ENCODE measurements at regions of chrX and their contacts with region 1.

Region 1: DNA sequence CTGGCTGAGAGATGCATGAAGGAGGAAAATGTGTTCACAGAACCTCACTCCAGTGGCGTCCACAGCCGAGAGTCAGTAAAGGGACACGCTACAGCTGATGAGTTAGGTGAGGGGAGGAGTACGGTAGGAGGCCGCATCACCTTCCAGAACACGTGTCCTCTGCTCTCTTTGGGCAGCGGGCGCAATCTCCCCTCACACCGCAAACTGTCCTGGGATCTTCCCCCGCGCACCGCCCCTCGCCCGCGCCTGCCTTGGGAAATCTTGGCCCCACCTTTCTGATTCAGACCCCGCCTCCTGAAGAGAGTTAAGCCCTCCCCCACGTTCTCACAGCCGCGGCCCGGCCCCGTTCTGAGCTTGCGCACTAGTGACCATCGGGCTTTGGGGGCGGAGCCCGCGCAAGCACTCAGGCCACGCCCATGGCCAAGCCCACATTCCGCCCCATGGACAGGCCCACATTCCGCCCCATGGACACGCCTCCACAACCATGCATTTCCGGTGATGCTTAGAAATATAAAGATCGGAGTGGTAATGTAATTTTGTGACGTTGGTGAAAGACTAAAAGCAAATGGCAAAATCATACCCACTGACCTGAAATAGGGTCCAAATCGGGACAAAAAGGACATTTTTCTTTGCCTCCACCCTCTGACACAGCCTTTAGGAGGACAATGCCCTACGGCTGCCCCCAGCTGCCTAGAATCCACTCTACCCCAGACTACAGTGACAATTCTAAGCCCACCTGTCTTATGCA is 13.3 kb downstream of the SMIM10 start:
- DNase-seq: peak; percentile 82 to 92
- H3K4me3 ChIP-seq: peak overlapping the region; percentile 44 to 77 (median 54)
- H3K27ac ChIP-seq: peak overlapping the region; percentile 62; the same call in 1 of the 2 replicates
- H3K4me1 ChIP-seq: peaks cover 0 to 3% (median 1%) of the 10 kb centered on the region in 4 experiments; a peak in 2 of 7 replicates
- H3K27me3 ChIP-seq: no peaks in the 10 kb centered on the region
- CTCF ChIP-seq: no peak
- EP300 ChIP-seq: no peak
- POLR2A ChIP-seq: 0 out of 3 replicates have a peak, but pooled peaks of 1 of the 2 experiments have one; percentile 37
- RAD21 ChIP-seq: no peak

Region 2: GRCh38 chrX:134948333-134949241 is 55.5 kb before region 1 on chrX:
- CTCF ChIA-PET with region 1: no interaction called
- POLR2A ChIA-PET with region 1: no interaction called
- DNase-seq: no peak
- H3K4me3 ChIP-seq: no peak overlapping the region
- H3K27ac ChIP-seq: no peak overlapping the region
- H3K4me1 ChIP-seq: peaks cover 0 to 2% (median 0%) of the 10 kb centered on the region in 4 experiments; a peak in 3 of 7 replicates
- H3K27me3 ChIP-seq: no peaks in the 10 kb centered on the region
- CTCF ChIP-seq: no peak
- EP300 ChIP-seq: no peak
- POLR2A ChIP-seq: no peak
- RAD21 ChIP-seq: no peak

Region 3: GRCh38 chrX:134969726-134970125 is 34.3 kb before region 1 on chrX:
- CTCF ChIA-PET with region 1: interaction called, 17 read pairs
- POLR2A ChIA-PET with region 1: no interaction called
- DNase-seq: no peak
- H3K4me3 ChIP-seq: no peak overlapping the region
- H3K27ac ChIP-seq: no peak overlapping the region
- H3K4me1 ChIP-seq: no peaks in the 10 kb centered on the region
- H3K27me3 ChIP-seq: no peaks in the 10 kb centered on the region
- CTCF ChIP-seq: no peak
- EP300 ChIP-seq: no peak
- POLR2A ChIP-seq: no peak
- RAD21 ChIP-seq: no peak

Region 4: GRCh38 chrX:135024526-135024925 is 20.5 kb after region 1 on chrX:
- CTCF ChIA-PET with region 1: interaction called, 3 read pairs
- POLR2A ChIA-PET with region 1: interaction called, 10 read pairs
- DNase-seq: no peak
- H3K4me3 ChIP-seq: no peak overlapping the region
- H3K27ac ChIP-seq: no peak overlapping the region
- H3K4me1 ChIP-seq: peaks cover 0 to 3% (median 0%) of the 10 kb centered on the region in 4 experiments; a peak in 1 of 7 replicates
- H3K27me3 ChIP-seq: peaks cover 0 to 4% (median 0%) of the 10 kb centered on the region in 4 experiments; a peak in 1 of 7 replicates
- CTCF ChIP-seq: no peak
- EP300 ChIP-seq: no peak
- POLR2A ChIP-seq: no peak
- RAD21 ChIP-seq: no peak

Region 5: GRCh38 chrX:135112096-135112729 is 108.2 kb after region 1 on chrX:
- CTCF ChIA-PET with region 1: no interaction called
- POLR2A ChIA-PET with region 1: no interaction called
- DNase-seq: peak in 1 of 2 experiments; percentile 58
- H3K4me3 ChIP-seq: no peak overlapping the region
- H3K27ac ChIP-seq: no peak overlapping the region
- H3K4me1 ChIP-seq: no peaks in the 10 kb centered on the region
- H3K27me3 ChIP-seq: no peaks in the 10 kb centered on the region
- CTCF ChIP-seq: peak in 2 of 3 experiments; percentile 60 to 73; a peak in 3 of 4 replicates
- EP300 ChIP-seq: no peak
- POLR2A ChIP-seq: no peak
- RAD21 ChIP-seq: peak; percentile 59 to 71

Region 6: DNA sequence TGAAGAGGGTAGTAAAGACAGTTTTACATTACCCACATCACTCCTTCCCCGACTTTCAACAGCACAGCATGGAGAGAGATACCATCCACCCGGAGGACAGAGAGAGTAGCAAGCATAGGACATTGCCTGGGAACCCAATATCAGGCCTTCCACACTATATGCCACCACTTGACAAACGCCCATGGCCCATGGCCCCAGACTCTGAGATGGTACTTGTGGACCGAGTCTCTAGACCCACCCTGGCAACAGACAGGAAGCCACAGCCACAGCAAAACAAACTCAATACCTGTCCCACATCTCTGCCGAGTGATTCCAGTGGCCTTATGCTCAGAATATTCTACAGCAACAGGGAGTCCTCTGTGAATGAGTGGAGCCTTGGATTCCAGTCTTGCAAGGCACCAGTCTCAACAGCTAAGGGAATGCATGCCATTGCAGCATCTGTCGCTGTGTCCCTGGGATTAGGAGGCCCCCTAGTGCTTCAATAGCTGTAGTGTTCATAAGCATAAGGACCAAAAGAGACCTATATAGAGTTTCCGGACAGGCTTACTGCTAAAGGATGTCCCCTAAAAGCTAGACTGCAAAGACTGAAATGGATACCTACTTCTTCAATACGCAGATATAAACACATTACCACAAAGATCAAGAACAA is 181.9 kb after region 1 on chrX:
- CTCF ChIA-PET with region 1: no interaction called
- POLR2A ChIA-PET with region 1: no interaction called
- DNase-seq: peak in 1 of 2 experiments; percentile 25
- H3K4me3 ChIP-seq: no peak overlapping the region
- H3K27ac ChIP-seq: no peak overlapping the region
- H3K4me1 ChIP-seq: no peaks in the 10 kb centered on the region
- H3K27me3 ChIP-seq: no peaks in the 10 kb centered on the region
- CTCF ChIP-seq: peak; percentile 16 to 70 (median 58)
- EP300 ChIP-seq: no peak
- POLR2A ChIP-seq: no peak
- RAD21 ChIP-seq: peak; percentile 83 to 89

Measured in H1 (cell line).